Calu3 (cell line): ENCODE measurements at regions of chr10 and their contacts with region 1.

Region 1: GRCh38 chr10:7687228-7687907 is 15.7 kb upstream of the ITIH2 start:
- DNase-seq: peak; percentile 85
- H3K4me3 Mint-ChIP-seq: peak overlapping the region; percentile 50
- H3K27ac Mint-ChIP-seq: peak overlapping the region; percentile 80
- H3K4me1 Mint-ChIP-seq: peaks cover 27% of the 10 kb centered on the region
- H3K27me3 Mint-ChIP-seq: no peaks in the 10 kb centered on the region
- CTCF ChIP-seq: peak; percentile 87

Region 2: GRCh38 chr10:7525314-7526016 is 161.9 kb before region 1 on chr10:
- CTCF ChIA-PET with region 1: interaction called, 61 read pairs
- intact Hi-C with region 1: loop called (anchors 1 kb)
- DNase-seq: peak; percentile 71
- H3K4me3 Mint-ChIP-seq: no peak overlapping the region
- H3K27ac Mint-ChIP-seq: no peak overlapping the region
- H3K4me1 Mint-ChIP-seq: no peaks in the 10 kb centered on the region
- H3K27me3 Mint-ChIP-seq: peaks cover 35% of the 10 kb centered on the region
- CTCF ChIP-seq: peak; percentile 48

Region 3: DNA sequence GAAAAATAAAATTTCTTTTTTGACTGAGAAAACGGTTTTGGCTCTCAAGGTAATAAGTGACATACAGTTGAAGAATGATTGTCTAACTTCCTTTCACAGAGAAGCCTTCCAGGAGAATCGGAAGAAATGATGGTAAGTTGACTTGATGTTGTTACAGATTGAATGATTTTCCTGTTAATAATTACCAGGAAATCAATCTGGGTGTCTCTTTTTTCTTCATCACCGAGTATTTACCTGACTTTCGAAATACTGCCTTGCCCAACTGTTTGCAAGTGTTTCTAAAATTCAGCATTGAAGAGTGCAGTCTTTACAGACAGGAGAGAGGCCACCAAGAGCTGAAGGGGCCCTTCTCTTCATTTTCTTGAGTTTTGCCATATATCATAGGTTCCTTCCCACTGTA is 19.7 kb after region 1 on chr10:
- CTCF ChIA-PET with region 1: interaction called, 20 read pairs
- intact Hi-C with region 1: no loop called
- DNase-seq: peak; percentile 40
- H3K4me3 Mint-ChIP-seq: peak overlapping the region; percentile 28
- H3K27ac Mint-ChIP-seq: peak overlapping the region; percentile 79
- H3K4me1 Mint-ChIP-seq: peaks cover 47% of the 10 kb centered on the region
- H3K27me3 Mint-ChIP-seq: no peaks in the 10 kb centered on the region
- CTCF ChIP-seq: no peak

Region 4: GRCh38 chr10:7756360-7756992 is 69.1 kb after region 1 on chr10:
- CTCF ChIA-PET with region 1: interaction called, 17 read pairs
- intact Hi-C with region 1: loop called (anchors 5 kb)
- DNase-seq: peak; percentile 47
- H3K4me3 Mint-ChIP-seq: no peak overlapping the region
- H3K27ac Mint-ChIP-seq: no peak overlapping the region
- H3K4me1 Mint-ChIP-seq: no peaks in the 10 kb centered on the region
- H3K27me3 Mint-ChIP-seq: no peaks in the 10 kb centered on the region
- CTCF ChIP-seq: peak; percentile 48

Region 5: GRCh38 chr10:7818295-7819122 is 131.1 kb after region 1 on chr10 and contains the start of gene TAF3:
- CTCF ChIA-PET with region 1: interaction called, 12 read pairs
- intact Hi-C with region 1: loop called (anchors 1 kb)
- DNase-seq: peak; percentile 95
- H3K4me3 Mint-ChIP-seq: peak within 1 kb of the TSS; percentile 85
- H3K27ac Mint-ChIP-seq: peak within 1 kb of the TSS; percentile 58
- H3K4me1 Mint-ChIP-seq: peaks cover 23% of the 10 kb centered on the region
- H3K27me3 Mint-ChIP-seq: no peaks in the 10 kb centered on the region
- CTCF ChIP-seq: no peak
- total RNA-seq, gene TAF3: 12.7 and 14.5 TPM in 2 replicates

Region 6: DNA sequence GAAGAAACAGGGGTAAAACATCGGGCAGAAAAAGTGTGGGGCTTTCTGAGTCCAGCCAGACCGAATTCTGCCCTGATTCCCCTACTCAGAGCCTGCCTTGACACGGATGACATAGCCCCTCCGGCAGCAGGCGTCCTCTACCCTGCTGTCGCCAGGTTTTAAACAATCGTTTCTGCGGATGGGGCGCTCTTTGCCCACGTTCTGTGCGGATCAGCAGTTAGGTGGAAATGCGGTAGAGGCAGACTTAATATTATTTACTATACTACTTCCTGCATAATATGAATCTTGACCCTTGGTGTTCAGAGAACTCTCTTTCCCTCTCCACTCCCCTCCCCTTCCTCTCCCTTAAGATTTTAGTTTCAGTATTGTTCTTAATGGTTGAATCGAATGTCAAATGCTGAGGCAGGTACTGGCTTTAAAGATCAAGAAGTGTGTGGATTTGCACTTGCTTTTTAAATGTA is 369.5 kb after region 1 on chr10:
- CTCF ChIA-PET with region 1: no interaction called
- intact Hi-C with region 1: no loop called
- DNase-seq: no peak
- H3K4me3 Mint-ChIP-seq: peak overlapping the region; percentile 28
- H3K27ac Mint-ChIP-seq: no peak overlapping the region
- H3K4me1 Mint-ChIP-seq: peaks cover 9% of the 10 kb centered on the region
- H3K27me3 Mint-ChIP-seq: peaks cover 11% of the 10 kb centered on the region
- CTCF ChIP-seq: no peak